K562 (cell line): ENCODE measurements at regions of chr22 and their contacts with region 1.

Region 1: GRCh38 chr22:47586020-47586419 is 823.6 kb downstream of the TBC1D22A start:
- DNase-seq: no peak
- ATAC-seq: no peak
- H3K4me3 ChIP-seq: no peak overlapping the region
- H3K27ac ChIP-seq: no peak overlapping the region
- H3K4me1 ChIP-seq: no peaks in the 10 kb centered on the region
- H3K27me3 ChIP-seq: peaks cover 0 to 15% of the 10 kb centered on the region in 2 experiments; a peak in 2 of 5 replicates
- CTCF ChIP-seq: no peak
- EP300 ChIP-seq: no peak
- POLR2A ChIP-seq: no peak
- RAD21 ChIP-seq: no peak

Region 2: GRCh38 chr22:47540009-47540408 is 46.0 kb before region 1 on chr22:
- CTCF ChIA-PET with region 1: no interaction called
- POLR2A ChIA-PET with region 1: no interaction called
- in situ Hi-C with region 1: no loop called
- intact Hi-C with region 1: no loop called
- DNase-seq: no peak
- ATAC-seq: peak; percentile 80
- H3K4me3 ChIP-seq: no peak overlapping the region
- H3K27ac ChIP-seq: no peak overlapping the region
- H3K4me1 ChIP-seq: no peaks in the 10 kb centered on the region
- H3K27me3 ChIP-seq: peaks cover 0 to 13% of the 10 kb centered on the region in 2 experiments; a peak in 2 of 5 replicates
- CTCF ChIP-seq: no peak
- EP300 ChIP-seq: no peak
- POLR2A ChIP-seq: no peak
- RAD21 ChIP-seq: no peak

Region 3: GRCh38 chr22:48492366-48493320 is 906.6 kb after region 1 on chr22:
- CTCF ChIA-PET with region 1: no interaction called
- POLR2A ChIA-PET with region 1: no interaction called
- in situ Hi-C with region 1: loop called (anchors 25 kb)
- intact Hi-C with region 1: no loop called
- DNase-seq: peak; percentile 57 to 73 (median 70)
- ATAC-seq: peak; percentile 86
- H3K4me3 ChIP-seq: no peak overlapping the region
- H3K27ac ChIP-seq: no peak overlapping the region
- H3K4me1 ChIP-seq: no peaks in the 10 kb centered on the region
- H3K27me3 ChIP-seq: peaks cover 0 to 4% of the 10 kb centered on the region in 2 experiments; a peak in 1 of 5 replicates
- CTCF ChIP-seq: peak; percentile 59 to 73 (median 73)
- EP300 ChIP-seq: no peak
- POLR2A ChIP-seq: no peak
- RAD21 ChIP-seq: peak; percentile 47 to 72